Ascending aorta (tissue), 2 donors: ENCODE measurements at regions of chr14 and their contacts with region 1.

Region 1: GRCh38 chr14:90758028-90758889 is 58.0 kb downstream of the TTC7B start:
- DNase-seq: peak; percentile 62 to 94
- H3K4me3 ChIP-seq: peak overlapping the region; percentile 54 to 60
- H3K27ac ChIP-seq: peak overlapping the region; percentile 93 to 94
- H3K4me1 ChIP-seq: peaks cover 3 to 10% of the 10 kb centered on the region in 2 donors
- H3K27me3 ChIP-seq: no peaks in the 10 kb centered on the region
- CTCF ChIP-seq: peak; percentile 87 to 96 (median 88)

Region 2: DNA sequence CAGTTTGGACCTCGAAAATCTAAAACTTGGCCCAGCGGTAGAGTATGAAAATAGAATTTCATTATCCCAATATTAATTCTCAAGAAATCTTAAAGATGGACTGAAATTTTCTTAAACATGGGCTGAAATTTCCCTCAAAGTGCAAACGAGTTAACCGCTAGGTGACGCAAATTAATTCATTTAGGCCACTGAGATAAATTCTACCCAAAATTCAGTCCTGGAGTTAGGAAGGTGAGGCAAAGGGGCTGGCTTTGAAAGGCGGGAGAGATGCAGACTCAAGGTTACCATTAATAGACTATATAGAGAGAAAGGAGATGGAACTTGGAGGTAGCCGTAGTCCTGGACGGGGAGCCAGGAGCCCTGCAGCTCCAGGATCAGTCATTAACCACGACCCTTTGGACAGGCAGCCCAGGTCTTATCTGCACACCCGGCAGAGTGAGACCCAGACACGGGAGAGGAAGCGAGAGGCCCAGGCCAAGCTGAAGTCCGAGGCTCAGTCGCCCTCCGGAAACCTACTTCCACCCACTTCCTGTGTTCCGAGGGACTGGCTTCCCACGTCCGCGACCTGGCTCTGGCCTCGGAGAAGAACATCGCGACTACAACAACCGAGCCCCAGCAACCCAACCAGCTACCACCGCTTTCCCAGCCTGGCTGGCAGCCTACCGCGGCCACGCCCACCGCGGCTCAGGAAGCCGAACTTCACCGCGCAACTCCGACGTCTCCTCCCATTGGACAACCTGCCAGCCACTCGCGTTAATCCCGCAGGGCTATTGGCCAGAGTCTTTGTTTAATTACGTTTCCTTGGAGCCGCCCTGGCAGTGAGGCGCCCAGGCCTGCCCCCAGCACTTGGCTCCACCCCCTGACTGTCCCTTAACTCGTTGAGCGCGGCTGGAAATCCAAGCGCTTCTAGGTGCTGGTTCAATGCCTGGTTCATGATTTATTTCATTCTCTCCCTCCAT is 803.9 kb before region 1 on chr14 and contains the start of gene EFCAB11:
- intact Hi-C with region 1: loop called (anchors 10 kb)
- DNase-seq: peak; percentile 87 to 98
- H3K4me3 ChIP-seq: peak within 1 kb of the TSS; percentile 82 to 83
- H3K27ac ChIP-seq: peak within 1 kb of the TSS; percentile 91 to 94
- H3K4me1 ChIP-seq: peaks cover 4 to 11% of the 10 kb centered on the region in 2 donors
- H3K27me3 ChIP-seq: no peaks in the 10 kb centered on the region
- CTCF ChIP-seq: no peak
- total RNA-seq, gene EFCAB11: not detected

Region 3: DNA sequence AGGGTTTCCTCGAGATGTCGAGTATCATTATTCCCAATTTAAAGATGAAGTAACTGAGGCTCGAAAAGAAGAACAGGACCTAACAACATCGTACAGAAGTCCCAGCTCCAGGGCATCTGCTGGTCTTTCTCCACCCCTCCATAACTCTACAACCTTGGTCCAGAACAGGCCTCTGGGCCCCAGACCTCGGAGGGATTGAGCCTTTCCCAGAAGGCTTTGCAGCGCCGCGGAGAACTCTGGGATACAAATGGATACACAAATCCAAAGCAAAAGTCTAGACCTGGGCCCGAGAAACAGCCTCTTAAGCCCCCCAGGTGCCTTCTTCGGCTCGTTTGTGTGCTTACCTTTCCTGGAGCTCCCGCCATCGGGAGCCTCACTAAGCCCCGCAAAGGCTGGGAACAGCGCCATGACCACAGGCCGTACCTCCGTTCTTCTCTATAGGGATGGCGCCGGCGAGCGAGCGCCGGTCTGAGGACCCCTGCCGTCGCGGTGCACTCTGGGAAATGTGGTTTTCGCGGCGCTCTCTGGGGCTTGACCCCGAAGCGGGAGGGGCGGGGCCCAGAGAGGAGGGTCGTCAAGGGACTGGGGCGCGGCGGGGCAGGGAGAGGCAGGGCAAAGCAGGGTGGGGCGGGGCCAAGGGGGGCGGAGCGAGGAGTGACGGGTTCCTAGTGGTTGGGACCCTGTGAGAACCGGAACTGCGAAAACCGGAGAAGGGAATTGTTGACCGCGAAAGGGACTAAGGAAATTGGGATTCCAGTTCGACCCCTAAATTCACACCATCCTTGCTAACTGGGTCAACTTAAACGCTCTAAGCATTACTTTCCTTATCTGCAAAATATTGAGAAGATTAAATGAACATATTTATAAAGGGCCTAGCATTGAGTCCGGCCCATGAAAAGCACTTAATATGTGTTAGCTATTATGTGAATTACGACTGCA is 426.5 kb before region 1 on chr14 and contains the start of gene NRDE2:
- intact Hi-C with region 1: loop called (anchors 1 kb)
- DNase-seq: peak; percentile 91 to 99
- H3K4me3 ChIP-seq: peak within 1 kb of the TSS; percentile 70 to 81
- H3K27ac ChIP-seq: peak within 1 kb of the TSS; percentile 82 to 83
- H3K4me1 ChIP-seq: peaks cover 0 to 3% of the 10 kb centered on the region in 2 donors
- H3K27me3 ChIP-seq: no peaks in the 10 kb centered on the region
- CTCF ChIP-seq: no peak
- total RNA-seq, gene NRDE2: 9.2 TPM

Region 4: DNA sequence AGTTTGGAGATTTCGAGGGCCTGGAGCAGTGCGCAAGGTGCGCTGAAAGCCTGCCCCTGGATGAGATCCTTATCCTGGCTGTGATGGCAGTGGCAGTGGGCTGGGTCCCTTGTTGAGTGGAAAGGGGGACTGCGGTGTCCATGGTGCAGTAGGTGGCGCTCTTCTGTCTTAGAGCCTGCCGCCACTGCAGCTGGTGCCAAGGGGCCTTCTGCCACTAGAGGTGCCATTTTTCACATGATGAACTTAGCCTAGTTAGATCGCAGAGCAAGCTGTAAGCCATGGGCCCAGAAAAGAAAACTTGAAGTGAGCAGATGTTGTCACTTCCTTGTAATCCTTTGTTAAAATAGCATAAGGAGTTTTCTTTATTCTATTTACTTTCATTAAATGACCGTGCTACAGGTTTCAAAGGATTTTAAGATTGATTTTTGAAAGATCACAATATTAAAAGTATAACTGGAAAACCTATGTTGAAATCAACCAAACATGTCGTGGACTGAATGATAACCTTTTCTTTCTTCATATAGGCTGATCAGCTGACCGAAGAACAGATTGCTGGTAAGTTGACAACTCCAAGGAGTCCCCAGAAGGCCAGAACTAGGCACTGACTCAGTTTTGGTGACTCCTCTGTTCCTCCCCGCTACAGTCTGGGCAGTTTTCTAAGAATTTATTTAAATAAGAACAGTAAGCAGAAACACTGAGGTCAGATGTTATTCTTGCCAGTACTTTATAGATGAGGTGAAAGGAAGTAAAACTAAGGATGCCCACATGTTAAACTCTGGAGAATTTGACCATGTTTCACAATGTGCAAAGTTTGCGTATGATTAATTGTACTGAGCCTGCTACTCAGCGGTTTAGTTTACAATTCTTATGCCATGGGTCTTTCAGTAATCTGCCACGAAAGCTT is 358.5 kb before region 1 on chr14:
- intact Hi-C with region 1: loop called (anchors 2 kb)
- DNase-seq: peak; percentile 68 to 96
- H3K4me3 ChIP-seq: peak overlapping the region; percentile 94 to 98
- H3K27ac ChIP-seq: peak overlapping the region; percentile 90 to 97
- H3K4me1 ChIP-seq: peaks cover 0 to 36% of the 10 kb centered on the region in 2 donors
- H3K27me3 ChIP-seq: no peaks in the 10 kb centered on the region
- CTCF ChIP-seq: peak; percentile 97 to 99 (median 98)

Region 5: GRCh38 chr14:90444036-90444696 is 314.1 kb before region 1 on chr14:
- intact Hi-C with region 1: no loop called
- DNase-seq: no peak
- H3K4me3 ChIP-seq: no peak overlapping the region
- H3K27ac ChIP-seq: no peak overlapping the region
- H3K4me1 ChIP-seq: no peaks in the 10 kb centered on the region
- H3K27me3 ChIP-seq: no peaks in the 10 kb centered on the region
- CTCF ChIP-seq: no peak

Region 6: DNA sequence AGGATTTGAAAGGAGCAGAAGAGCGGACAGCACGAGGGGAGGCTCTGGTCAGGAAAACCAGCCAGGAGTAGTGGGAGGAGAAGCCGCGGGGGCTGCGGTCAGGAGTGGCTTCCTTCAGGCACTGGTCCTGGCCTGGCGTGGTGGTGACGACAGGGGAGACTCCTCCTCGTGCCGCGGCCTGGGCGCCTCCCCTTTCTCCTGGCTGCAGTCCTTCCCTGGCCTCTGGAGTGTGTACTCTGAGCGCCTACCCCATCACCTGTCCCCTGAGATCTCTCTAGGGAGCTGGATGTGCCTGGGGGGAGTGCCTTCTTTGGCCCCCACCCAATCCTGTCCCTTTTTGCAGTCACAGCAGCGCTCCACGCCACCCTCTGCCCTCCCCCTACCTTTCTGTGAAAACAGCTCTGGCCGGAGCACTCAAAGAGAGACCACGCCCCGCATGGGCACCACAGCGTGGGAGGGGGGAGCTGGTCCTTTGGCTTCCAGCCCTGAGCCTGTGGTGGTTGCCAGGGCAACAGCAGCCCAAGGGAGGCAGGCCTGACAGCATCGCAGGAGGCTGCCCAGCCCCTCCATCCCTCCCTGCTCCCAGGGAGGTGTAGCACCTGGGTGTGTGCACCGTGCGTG is 235.6 kb before region 1 on chr14:
- intact Hi-C with region 1: loop called (anchors 5 kb)
- DNase-seq: peak in 1 of 2 donors; percentile 80
- H3K4me3 ChIP-seq: peak overlapping the region in 1 of 2 donors; percentile 1
- H3K27ac ChIP-seq: peak overlapping the region; percentile 71 to 83
- H3K4me1 ChIP-seq: peaks cover 16 to 39% of the 10 kb centered on the region in 2 donors
- H3K27me3 ChIP-seq: no peaks in the 10 kb centered on the region
- CTCF ChIP-seq: no peak

Region 7: DNA sequence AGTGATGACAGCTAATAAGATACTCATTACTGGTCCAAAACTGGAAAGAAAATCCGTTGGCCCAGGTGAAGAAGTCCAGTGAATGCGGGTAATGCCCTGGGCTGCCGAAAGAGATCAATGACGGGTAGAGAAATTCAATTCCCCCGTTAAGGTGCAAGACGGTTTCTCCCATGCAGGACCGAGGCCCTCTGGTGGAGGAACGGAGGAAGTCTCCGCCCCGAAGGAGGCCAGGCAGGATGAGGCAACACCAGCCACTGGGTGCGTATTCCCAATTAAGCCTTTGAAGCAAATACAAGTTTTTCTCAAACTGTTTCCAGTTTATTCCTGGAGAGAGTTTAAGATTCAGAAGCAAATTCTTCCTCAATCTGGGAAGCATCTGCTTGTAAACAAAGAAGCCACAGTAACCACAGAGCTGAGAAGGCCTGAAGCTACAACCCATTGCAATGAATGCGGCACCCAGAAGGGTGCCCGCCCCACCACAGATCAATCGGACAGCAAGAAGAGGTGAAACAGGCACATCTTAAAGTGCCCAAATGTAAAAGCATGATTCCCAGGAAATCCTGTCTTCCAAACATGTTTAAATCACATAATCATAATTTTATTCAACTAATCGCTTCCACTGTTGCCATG is 60.6 kb before region 1 on chr14:
- intact Hi-C with region 1: loop called (anchors 1 kb)
- DNase-seq: peak; percentile 50 to 92
- H3K4me3 ChIP-seq: peak overlapping the region in 1 of 2 donors; percentile 28
- H3K27ac ChIP-seq: peak overlapping the region; percentile 76 to 86
- H3K4me1 ChIP-seq: peaks cover 12 to 25% of the 10 kb centered on the region in 2 donors
- H3K27me3 ChIP-seq: no peaks in the 10 kb centered on the region
- CTCF ChIP-seq: peak; percentile 88 to 97 (median 95)

Region 8: DNA sequence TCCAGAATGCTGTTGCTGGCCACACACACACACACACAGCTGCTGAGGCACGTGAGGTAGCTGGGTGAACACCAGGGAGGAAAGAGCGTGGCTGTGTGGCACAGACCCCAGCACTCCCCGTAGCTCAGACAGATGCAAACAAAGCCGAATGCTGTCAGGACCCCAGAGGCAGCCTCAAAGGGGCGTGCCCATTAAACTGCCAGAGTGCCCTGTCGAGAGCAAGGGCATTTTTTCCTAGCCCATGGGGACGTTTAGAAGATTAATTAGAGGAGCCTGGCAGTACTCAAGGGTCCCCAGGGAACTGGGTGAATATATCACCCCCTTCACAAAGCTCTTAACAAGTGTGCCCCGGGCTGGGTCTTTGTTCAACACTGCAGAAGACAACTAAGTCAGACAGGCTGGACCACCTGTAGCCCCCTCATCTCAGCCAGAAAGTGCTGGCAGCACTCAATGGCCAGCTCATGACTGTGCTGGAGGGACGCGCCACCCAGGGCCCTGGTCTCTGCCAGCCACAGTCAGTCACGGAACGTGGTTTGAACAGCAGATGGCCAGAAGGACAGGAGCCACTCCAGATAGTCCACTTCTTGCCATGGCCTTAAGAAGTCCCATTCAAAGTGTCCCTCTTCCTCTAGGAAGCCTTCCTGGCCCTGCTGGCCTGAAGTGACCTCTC is 20.4 kb after region 1 on chr14:
- intact Hi-C with region 1: no loop called
- DNase-seq: peak in 1 of 2 donors; percentile 56
- H3K4me3 ChIP-seq: no peak overlapping the region
- H3K27ac ChIP-seq: no peak overlapping the region
- H3K4me1 ChIP-seq: no peaks in the 10 kb centered on the region
- H3K27me3 ChIP-seq: no peaks in the 10 kb centered on the region
- CTCF ChIP-seq: no peak

Region 9: GRCh38 chr14:90827916-90828610 is 69.8 kb after region 1 on chr14:
- intact Hi-C with region 1: loop called (anchors 2 kb)
- DNase-seq: peak; percentile 76 to 96
- H3K4me3 ChIP-seq: peak overlapping the region; percentile 35 to 66
- H3K27ac ChIP-seq: peak overlapping the region; percentile 58 to 82
- H3K4me1 ChIP-seq: peaks cover 4 to 5% of the 10 kb centered on the region in 2 donors
- H3K27me3 ChIP-seq: no peaks in the 10 kb centered on the region
- CTCF ChIP-seq: no peak